Activated naive CD4-positive, alpha-beta T cell treated with anti-CD3 and anti-CD28 coated beads, Interleukin-2, amount 10 ng/mL, durations not matched to agents 7 days and 5 days (primary cell): ENCODE measurements at regions of chr16 and their contacts with region 1.

Region 1: GRCh38 chr16:117379-118365 is 20.8 kb downstream of the NPRL3 start:
- DNase-seq: peak; percentile 79
- H3K4me3 Mint-ChIP-seq: no peak overlapping the region
- H3K27ac Mint-ChIP-seq: no peak overlapping the region
- H3K4me1 Mint-ChIP-seq: peaks cover 10% of the 10 kb centered on the region
- H3K27me3 Mint-ChIP-seq: no peaks in the 10 kb centered on the region

Region 2: GRCh38 chr16:38939-39892 is 78.5 kb before region 1 on chr16:
- CTCF ChIA-PET with region 1: no interaction called
- DNase-seq: peak; percentile 83
- H3K4me3 Mint-ChIP-seq: no peak overlapping the region
- H3K27ac Mint-ChIP-seq: peak overlapping the region; percentile 82
- H3K4me1 Mint-ChIP-seq: peaks cover 59% of the 10 kb centered on the region
- H3K27me3 Mint-ChIP-seq: no peaks in the 10 kb centered on the region

Region 3: GRCh38 chr16:106623-107324 is 10.9 kb before region 1 on chr16:
- CTCF ChIA-PET with region 1: interaction called, 16 read pairs
- DNase-seq: peak; percentile 68
- H3K4me3 Mint-ChIP-seq: no peak overlapping the region
- H3K27ac Mint-ChIP-seq: no peak overlapping the region
- H3K4me1 Mint-ChIP-seq: no peaks in the 10 kb centered on the region
- H3K27me3 Mint-ChIP-seq: no peaks in the 10 kb centered on the region

Region 4: DNA sequence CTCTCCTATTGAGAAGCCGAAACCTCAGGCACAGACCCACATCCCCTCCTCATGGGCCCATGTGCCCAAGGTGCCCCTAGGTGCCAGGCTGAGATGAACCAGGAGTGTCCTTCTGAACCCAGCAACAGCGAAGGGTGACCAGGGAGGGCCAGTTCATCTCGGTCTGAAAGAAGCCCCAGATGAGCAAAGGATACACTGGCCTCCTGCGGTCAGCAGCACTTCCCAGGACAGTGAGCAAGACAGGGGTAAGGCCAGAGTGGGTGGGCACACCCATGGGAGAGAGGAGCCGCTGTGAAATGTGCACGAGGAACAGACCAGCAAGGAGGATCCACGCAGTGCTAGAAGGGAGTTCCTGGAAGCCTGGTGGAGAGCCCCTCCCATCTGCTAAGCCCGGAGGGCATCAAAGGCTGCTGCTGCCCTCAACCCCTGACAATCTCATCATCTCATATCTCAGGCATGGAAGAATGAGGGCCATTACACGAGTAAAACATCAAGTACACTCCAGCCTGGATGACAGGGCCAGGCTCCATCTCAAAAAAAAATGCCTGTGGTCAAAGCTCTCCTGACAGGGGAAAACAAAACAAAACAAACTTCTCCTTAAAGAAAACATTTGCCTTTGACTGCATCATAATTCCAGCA is 31.5 kb after region 1 on chr16:
- CTCF ChIA-PET with region 1: no interaction called
- DNase-seq: no peak
- H3K4me3 Mint-ChIP-seq: no peak overlapping the region
- H3K27ac Mint-ChIP-seq: no peak overlapping the region
- H3K4me1 Mint-ChIP-seq: peaks cover 2% of the 10 kb centered on the region
- H3K27me3 Mint-ChIP-seq: peaks cover 59% of the 10 kb centered on the region

Region 5: GRCh38 chr16:181668-182021 is 64.0 kb after region 1 on chr16:
- CTCF ChIA-PET with region 1: interaction called, 11 read pairs
- DNase-seq: no peak
- H3K4me3 Mint-ChIP-seq: no peak overlapping the region
- H3K27ac Mint-ChIP-seq: no peak overlapping the region
- H3K4me1 Mint-ChIP-seq: peaks cover 10% of the 10 kb centered on the region
- H3K27me3 Mint-ChIP-seq: peaks cover 48% of the 10 kb centered on the region

Region 6: GRCh38 chr16:361872-362701 is 244.4 kb after region 1 on chr16:
- CTCF ChIA-PET with region 1: interaction called, 25 read pairs
- DNase-seq: peak; percentile 87
- H3K4me3 Mint-ChIP-seq: peak overlapping the region; percentile 26
- H3K27ac Mint-ChIP-seq: no peak overlapping the region
- H3K4me1 Mint-ChIP-seq: peaks cover 6% of the 10 kb centered on the region
- H3K27me3 Mint-ChIP-seq: peaks cover 18% of the 10 kb centered on the region